Activated CD4-positive, alpha-beta memory T cell treated with anti-CD3 and anti-CD28 coated beads for 36 hours (primary cell): ENCODE measurements at regions of chr11 and their contacts with region 1.

Region 1: GRCh38 chr11:35214792-35215193 is 75.8 kb downstream of the CD44 start:
- DNase-seq: peak; percentile 78
- H3K4me3 Mint-ChIP-seq: no peak overlapping the region
- H3K27ac Mint-ChIP-seq: peak overlapping the region; percentile 81
- H3K4me1 Mint-ChIP-seq: peaks cover 74% of the 10 kb centered on the region
- H3K27me3 Mint-ChIP-seq: no peaks in the 10 kb centered on the region

Region 2: DNA sequence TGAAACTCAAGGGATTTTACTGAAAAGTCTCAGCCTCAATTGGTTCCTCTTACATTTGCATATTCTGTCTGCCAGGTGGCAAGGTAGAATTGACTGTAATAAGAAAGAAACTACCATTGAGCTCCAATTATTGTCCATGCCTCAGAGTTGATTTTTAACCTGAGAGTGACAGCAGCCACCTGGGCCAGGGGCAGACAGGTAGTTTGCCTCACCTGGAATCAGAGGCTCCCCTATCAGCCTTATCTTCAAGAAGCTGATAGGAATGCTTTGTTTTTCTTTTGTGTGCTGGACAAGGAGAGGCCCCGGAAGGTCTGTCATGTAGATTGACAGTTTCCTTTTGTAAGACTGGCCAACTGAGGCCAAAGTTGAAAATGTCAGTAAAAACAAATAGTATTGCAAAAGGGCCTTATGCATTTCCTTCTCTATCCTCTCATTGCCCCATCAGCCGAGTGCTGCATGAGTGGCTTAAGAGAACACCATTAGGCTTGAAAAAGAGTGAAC is 41.7 kb before region 1 on chr11:
- CTCF ChIA-PET with region 1: no interaction called
- POLR2A ChIA-PET with region 1: no interaction called
- intact Hi-C with region 1: loop called (anchors 1 kb)
- DNase-seq: no peak
- H3K4me3 Mint-ChIP-seq: peak overlapping the region; percentile 40
- H3K27ac Mint-ChIP-seq: peak overlapping the region; percentile 82
- H3K4me1 Mint-ChIP-seq: peaks cover 95% of the 10 kb centered on the region
- H3K27me3 Mint-ChIP-seq: no peaks in the 10 kb centered on the region

Region 3: DNA sequence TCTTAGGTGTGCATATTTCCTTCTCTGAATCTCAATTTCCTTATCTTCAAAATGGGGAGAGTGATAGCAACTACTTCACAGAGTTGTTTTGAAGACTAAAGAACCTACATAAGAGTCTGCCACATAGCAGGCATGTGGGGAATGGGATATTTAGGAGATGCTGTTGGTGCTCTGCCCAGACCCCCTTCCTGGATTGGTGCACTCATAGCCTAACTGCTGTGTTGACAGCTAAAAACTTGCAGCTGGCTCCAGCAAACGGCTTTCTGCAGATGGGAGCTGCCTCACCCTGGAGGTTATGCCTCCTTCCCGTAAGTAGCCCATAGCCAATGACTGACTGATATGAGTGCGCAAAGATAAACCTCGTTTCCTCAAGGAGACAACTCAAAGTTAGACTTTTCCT is 30.3 kb after region 1 on chr11:
- CTCF ChIA-PET with region 1: no interaction called
- POLR2A ChIA-PET with region 1: no interaction called
- intact Hi-C with region 1: no loop called
- DNase-seq: no peak
- H3K4me3 Mint-ChIP-seq: no peak overlapping the region
- H3K27ac Mint-ChIP-seq: no peak overlapping the region
- H3K4me1 Mint-ChIP-seq: peaks cover 55% of the 10 kb centered on the region
- H3K27me3 Mint-ChIP-seq: no peaks in the 10 kb centered on the region

Region 4: DNA sequence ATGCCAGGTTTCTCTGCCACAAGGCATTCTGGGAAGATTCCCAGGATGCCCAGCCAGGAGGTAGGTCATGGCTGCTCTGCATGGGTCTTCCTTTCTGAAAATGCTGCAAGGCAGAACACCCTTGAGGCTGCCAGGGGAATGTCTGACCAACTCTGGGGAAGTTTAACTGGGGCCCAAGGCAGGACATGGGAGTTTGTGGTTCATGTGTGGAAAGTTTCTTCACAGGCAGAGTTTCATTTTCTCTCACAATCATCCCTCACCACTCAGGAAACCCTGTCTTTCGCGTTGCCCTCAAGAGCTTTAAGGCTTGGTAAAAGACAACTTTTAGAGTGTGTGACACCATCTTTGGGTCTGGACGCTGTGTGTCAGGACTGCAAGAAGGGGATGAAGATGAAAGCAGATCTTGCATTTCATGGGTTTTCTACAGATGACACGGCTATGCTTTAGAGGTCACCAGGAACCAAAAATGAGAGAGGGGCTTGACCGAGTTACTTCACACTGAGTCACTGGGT is 57.7 kb after region 1 on chr11:
- CTCF ChIA-PET with region 1: no interaction called
- POLR2A ChIA-PET with region 1: no interaction called
- intact Hi-C with region 1: loop called (anchors 2 kb)
- DNase-seq: peak; percentile 74
- H3K4me3 Mint-ChIP-seq: peak overlapping the region; percentile 38
- H3K27ac Mint-ChIP-seq: peak overlapping the region; percentile 80
- H3K4me1 Mint-ChIP-seq: peaks cover 44% of the 10 kb centered on the region
- H3K27me3 Mint-ChIP-seq: peaks cover 4% of the 10 kb centered on the region

Region 5: DNA sequence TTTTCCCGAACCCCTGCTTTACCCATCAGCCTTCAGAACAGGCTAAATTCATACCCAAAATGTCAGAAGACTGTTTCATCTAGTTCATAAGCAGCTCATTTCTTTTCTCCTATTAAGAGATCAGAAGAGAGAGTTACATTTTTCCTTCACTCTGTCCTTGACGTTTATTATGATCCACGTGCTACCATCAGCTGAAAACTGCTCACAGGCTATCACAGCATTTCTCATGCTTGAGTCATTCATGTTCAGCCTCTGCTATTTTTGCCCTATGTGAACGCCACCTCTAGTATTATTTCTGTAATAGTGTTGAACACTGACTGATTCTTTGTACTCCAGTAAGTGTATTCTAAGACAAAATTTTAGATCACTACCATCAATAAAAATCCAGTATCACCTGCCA is 152.7 kb after region 1 on chr11:
- CTCF ChIA-PET with region 1: no interaction called
- POLR2A ChIA-PET with region 1: no interaction called
- intact Hi-C with region 1: no loop called
- DNase-seq: no peak
- H3K4me3 Mint-ChIP-seq: no peak overlapping the region
- H3K27ac Mint-ChIP-seq: no peak overlapping the region
- H3K4me1 Mint-ChIP-seq: peaks cover 3% of the 10 kb centered on the region
- H3K27me3 Mint-ChIP-seq: no peaks in the 10 kb centered on the region